ENCODE measurements at regions of chr6 and their contacts with region 1.

Region 1: DNA sequence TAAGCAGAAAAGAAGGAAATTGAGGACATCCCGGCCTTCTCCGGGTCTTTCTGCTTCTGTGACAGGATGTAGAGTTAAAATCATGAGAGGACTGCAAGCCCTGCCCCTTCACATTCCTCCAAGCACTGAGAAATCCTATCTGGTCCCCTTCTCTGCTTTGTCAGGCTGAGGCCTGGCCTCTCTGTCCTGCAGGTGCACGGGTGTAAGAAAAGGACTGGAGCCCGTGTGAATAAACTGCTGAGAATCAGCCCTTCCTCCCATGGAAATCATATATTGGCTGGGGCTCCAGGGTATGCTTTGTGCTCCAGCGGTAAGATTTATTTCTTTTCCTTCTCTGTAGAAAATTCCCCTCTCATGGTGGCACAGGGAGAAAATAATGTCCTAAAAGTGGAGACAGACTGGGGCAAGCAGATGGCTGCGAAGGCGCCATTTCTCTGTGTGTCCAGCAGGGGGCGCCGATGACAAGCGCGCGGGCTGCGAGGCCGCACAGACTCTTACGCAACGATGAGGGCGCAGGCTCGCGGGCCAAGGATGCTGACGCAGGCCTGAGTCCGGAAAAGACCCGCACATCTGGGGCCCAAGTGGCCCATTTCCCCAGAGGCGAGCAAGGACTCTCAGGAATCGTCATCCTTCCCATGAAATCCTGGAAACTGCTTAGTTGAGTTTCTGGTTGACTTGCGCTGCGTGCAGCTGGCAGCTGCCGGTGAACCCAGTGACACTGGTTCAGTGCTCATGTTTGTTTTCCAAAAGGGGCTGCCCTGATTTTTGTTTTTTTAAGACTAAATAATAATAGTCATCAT is 258.6 kb downstream of the ADGB start:
- DNase-seq: peak; percentile 77
- H3K4me3 ChIP-seq: peak overlapping the region in 1 of 3 experiments; percentile 12
- H3K27ac ChIP-seq: no peak overlapping the region
- H3K4me1 ChIP-seq: peaks cover 2% of the 10 kb centered on the region
- H3K27me3 ChIP-seq: no peaks in the 10 kb centered on the region
- CTCF ChIP-seq: peak; percentile 93 to 96
- POLR2A ChIP-seq: no peak

Region 2: DNA sequence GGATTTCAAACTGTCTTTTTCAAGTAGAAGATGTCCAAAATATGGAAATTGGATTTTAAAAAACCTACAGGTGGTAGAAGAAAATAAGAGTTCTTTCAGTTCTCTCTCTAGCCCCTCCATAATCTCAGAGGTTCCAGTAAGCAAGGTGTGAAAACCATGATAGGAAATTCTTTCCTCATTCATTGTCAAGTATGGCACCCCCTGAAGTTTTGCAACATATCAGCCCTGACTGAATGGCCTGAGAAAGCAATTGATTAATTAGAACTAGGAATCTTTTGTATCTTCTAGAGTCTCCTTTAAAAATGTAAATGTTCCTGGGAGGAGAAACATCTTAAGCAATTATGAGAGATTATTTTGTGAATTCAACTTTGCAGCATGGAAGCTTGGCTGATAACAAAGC is 148.1 kb after region 1 on chr6:
- CTCF ChIA-PET with region 1: no interaction called
- POLR2A ChIA-PET with region 1: no interaction called
- dilution Hi-C with region 1: no loop called
- intact Hi-C with region 1: loop called (anchors 5 kb)
- DNase-seq: no peak
- H3K4me3 ChIP-seq: no peak overlapping the region
- H3K27ac ChIP-seq: no peak overlapping the region
- H3K4me1 ChIP-seq: no peaks in the 10 kb centered on the region
- H3K27me3 ChIP-seq: no peaks in the 10 kb centered on the region
- CTCF ChIP-seq: no peak
- POLR2A ChIP-seq: no peak

Region 3: GRCh38 chr6:147166360-147166944 is 309.1 kb after region 1 on chr6:
- CTCF ChIA-PET with region 1: no interaction called
- POLR2A ChIA-PET with region 1: no interaction called
- dilution Hi-C with region 1: no loop called
- intact Hi-C with region 1: loop called (anchors 5 kb)
- DNase-seq: peak; percentile 88
- H3K4me3 ChIP-seq: no peak overlapping the region
- H3K27ac ChIP-seq: peak overlapping the region; percentile 71
- H3K4me1 ChIP-seq: peaks cover 22% of the 10 kb centered on the region
- H3K27me3 ChIP-seq: no peaks in the 10 kb centered on the region
- CTCF ChIP-seq: no peak
- POLR2A ChIP-seq: no peak

Region 4: DNA sequence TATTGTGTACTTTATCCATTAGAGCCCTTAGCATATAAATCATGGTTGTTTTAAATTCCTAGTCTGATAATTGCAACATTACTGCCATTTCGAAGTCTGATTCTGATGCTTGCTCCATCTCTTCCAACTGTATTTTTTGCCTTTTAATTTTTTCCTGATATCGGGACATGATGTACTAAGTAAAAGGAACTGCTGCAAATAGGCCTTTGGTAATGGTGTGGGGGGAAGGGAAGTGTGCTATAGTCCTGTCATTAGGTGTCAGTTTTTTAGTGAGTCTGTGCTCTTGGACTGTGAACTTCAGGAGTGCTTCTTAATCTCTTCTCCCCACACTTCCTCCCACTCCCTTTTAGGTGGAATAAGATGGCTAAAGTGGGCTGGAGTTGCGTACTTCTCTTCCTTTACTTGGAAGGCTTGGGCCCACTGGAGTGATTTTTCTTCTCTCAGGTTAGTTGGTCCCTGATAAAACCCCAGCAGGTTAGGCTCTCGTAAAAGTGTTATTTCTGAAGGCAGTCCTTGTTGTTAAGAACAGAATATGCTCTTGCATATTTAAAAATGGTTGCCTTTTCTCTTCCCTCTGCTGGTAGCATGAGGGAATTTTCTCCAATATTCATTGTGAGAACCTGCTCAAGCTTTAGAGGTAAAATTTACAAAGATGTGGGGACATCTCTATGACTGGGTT is 364.9 kb after region 1 on chr6:
- CTCF ChIA-PET with region 1: interaction called, 3 read pairs
- POLR2A ChIA-PET with region 1: no interaction called
- dilution Hi-C with region 1: no loop called
- intact Hi-C with region 1: loop called (anchors 1 kb)
- DNase-seq: peak; percentile 47
- H3K4me3 ChIP-seq: no peak overlapping the region
- H3K27ac ChIP-seq: no peak overlapping the region
- H3K4me1 ChIP-seq: no peaks in the 10 kb centered on the region
- H3K27me3 ChIP-seq: no peaks in the 10 kb centered on the region
- CTCF ChIP-seq: peak in 1 of 2 donors; percentile 33
- POLR2A ChIP-seq: no peak

Region 5: GRCh38 chr6:147366290-147366689 is 508.9 kb after region 1 on chr6:
- CTCF ChIA-PET with region 1: no interaction called
- POLR2A ChIA-PET with region 1: no interaction called
- dilution Hi-C with region 1: no loop called
- intact Hi-C with region 1: loop called (anchors 5 kb)
- DNase-seq: no peak
- H3K4me3 ChIP-seq: no peak overlapping the region
- H3K27ac ChIP-seq: no peak overlapping the region
- H3K4me1 ChIP-seq: no peaks in the 10 kb centered on the region
- H3K27me3 ChIP-seq: no peaks in the 10 kb centered on the region
- CTCF ChIP-seq: no peak
- POLR2A ChIP-seq: no peak

Measured in endothelial cell of umbilical vein (primary cell).